ENCODE measurements at regions of chr2 and their contacts with region 1.

Region 1: DNA sequence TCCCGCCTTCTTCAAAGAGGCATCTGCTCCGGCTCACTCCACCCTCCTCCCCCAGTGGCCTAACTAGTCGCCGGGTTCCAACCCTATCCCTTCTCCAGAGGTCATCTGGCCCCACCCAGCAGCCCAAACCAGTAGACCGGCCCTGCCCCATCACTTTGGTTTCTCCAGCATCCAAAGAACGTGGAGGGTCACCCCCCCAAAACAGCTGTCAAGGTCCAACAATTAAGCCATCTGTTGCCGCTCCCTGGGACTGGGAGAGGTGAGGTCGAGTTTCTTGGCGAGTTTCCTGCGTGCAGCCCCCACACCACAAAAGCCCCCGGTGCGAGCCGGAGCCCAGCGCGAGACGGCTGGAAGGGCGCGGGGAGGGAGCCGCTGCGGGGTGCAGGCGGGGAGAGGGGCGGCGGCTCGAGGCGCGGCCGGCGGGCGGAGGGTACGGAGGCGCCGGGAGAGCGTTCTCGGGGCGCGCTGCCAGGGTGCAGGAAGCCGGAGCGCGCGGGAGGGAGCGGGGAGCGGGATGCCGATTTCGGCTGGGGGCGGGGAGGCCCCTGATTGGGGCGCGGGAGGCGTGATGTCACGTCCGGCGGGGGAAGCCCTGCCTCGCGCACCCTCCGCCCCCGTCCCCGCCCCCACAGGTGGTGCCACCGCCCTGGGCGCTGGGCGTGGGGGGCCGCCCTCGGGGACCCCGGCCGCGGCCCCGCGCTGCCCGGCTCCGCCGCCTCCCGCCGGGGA is 571 bp upstream of the GPC1 start:
- DNase-seq: peak; percentile 92
- H3K4me3 Mint-ChIP-seq: peak overlapping the region; percentile 85
- H3K27ac Mint-ChIP-seq: peak overlapping the region; percentile 86
- H3K4me1 Mint-ChIP-seq: peaks cover 23% of the 10 kb centered on the region
- H3K27me3 Mint-ChIP-seq: no peaks in the 10 kb centered on the region
- CTCF ChIP-seq: no peak

Region 2: GRCh38 chr2:240060977-240061591 is 373.8 kb before region 1 on chr2:
- CTCF ChIA-PET with region 1: interaction called, 3 read pairs
- POLR2A ChIA-PET with region 1: no interaction called
- intact Hi-C with region 1: loop called (anchors 10 kb)
- DNase-seq: peak; percentile 68
- H3K4me3 Mint-ChIP-seq: no peak overlapping the region
- H3K27ac Mint-ChIP-seq: no peak overlapping the region
- H3K4me1 Mint-ChIP-seq: no peaks in the 10 kb centered on the region
- H3K27me3 Mint-ChIP-seq: peaks cover 100% of the 10 kb centered on the region
- CTCF ChIP-seq: peak; percentile 66

Region 3: DNA sequence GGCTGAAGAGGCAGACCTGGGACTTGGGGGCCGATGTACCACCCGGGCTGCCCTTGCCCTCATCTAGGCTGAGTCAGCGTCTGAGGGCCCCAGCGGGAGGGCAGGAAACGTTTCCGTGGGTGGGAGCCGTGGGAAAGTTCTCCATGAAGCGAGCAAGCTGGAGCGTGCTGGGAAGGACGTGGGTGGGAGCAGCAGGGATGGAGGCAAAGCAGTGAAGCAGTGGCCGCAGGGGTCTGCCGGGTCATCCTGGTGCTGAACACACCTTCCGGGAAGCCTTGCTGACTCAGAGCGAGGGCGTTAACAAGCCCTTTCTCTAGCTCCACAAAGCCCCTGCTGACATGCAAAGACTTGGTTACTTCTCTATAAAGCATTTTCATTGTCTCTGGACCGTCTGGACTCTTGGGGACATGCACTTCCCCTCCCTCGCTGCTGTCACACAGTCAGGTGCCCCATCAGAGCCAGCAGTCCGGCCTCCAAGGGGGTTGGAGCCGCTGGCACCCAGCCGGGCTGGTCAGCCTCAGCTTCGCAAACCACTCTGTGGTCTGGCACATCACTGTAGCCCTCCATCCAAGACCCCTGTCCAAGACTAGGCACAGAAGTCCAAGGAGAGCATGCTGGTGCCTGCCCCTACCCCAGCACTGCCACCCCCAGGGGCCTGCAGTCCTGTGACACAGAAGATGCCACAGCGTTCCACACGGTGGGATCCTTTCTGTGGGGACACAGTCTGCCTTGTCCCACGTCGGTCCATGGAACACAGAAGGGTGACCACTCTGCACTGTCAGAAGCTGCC is 114.5 kb before region 1 on chr2:
- CTCF ChIA-PET with region 1: no interaction called
- POLR2A ChIA-PET with region 1: interaction called, 3 read pairs
- intact Hi-C with region 1: loop called (anchors 10 kb)
- DNase-seq: peak; percentile 83
- H3K4me3 Mint-ChIP-seq: no peak overlapping the region
- H3K27ac Mint-ChIP-seq: no peak overlapping the region
- H3K4me1 Mint-ChIP-seq: peaks cover 7% of the 10 kb centered on the region
- H3K27me3 Mint-ChIP-seq: peaks cover 21% of the 10 kb centered on the region
- CTCF ChIP-seq: no peak

Region 4: GRCh38 chr2:240369801-240370585 is 64.9 kb before region 1 on chr2:
- CTCF ChIA-PET with region 1: interaction called, 9 read pairs
- POLR2A ChIA-PET with region 1: interaction called, 65 read pairs
- intact Hi-C with region 1: loop called (anchors 1 kb)
- DNase-seq: peak; percentile 84
- H3K4me3 Mint-ChIP-seq: no peak overlapping the region
- H3K27ac Mint-ChIP-seq: peak overlapping the region; percentile 35
- H3K4me1 Mint-ChIP-seq: peaks cover 17% of the 10 kb centered on the region
- H3K27me3 Mint-ChIP-seq: no peaks in the 10 kb centered on the region
- CTCF ChIP-seq: no peak

Region 5: DNA sequence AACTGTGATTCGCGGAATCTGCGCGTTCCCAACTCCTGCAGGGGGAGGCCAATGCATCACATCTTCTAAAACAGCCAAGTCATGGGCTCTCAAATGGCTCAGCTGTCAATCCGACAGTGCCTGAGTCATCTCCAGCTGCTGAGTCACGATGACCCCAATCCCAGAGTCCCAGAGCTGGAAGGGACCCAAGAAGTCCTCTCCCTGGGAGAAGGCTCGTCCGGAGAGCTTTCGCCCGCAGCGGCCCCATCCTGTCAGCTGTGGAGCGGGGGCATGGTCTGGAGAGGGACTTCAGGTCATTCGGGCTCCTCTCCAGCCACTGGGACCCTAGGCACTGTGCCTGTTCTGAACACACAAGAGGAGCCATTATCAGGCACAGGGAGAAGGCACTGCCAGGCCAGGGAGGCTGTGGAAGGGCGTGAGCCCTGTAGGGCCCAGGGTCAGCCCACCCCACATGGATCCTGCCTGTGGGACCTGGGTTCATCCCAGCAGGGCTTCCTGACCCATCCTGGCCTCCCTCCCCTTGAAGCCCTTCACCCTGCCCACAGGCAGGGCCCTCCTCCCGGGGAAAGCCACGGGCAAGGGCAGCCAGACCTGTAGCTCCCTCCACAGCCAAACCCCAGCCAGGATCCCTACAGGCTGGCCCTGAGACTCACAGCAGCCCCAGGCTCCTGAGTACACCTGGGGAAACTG is 47.1 kb before region 1 on chr2:
- CTCF ChIA-PET with region 1: no interaction called
- POLR2A ChIA-PET with region 1: interaction called, 3 read pairs
- intact Hi-C with region 1: loop called (anchors 5 kb)
- DNase-seq: peak; percentile 95
- H3K4me3 Mint-ChIP-seq: no peak overlapping the region
- H3K27ac Mint-ChIP-seq: no peak overlapping the region
- H3K4me1 Mint-ChIP-seq: peaks cover 6% of the 10 kb centered on the region
- H3K27me3 Mint-ChIP-seq: no peaks in the 10 kb centered on the region
- CTCF ChIP-seq: no peak

Region 6: DNA sequence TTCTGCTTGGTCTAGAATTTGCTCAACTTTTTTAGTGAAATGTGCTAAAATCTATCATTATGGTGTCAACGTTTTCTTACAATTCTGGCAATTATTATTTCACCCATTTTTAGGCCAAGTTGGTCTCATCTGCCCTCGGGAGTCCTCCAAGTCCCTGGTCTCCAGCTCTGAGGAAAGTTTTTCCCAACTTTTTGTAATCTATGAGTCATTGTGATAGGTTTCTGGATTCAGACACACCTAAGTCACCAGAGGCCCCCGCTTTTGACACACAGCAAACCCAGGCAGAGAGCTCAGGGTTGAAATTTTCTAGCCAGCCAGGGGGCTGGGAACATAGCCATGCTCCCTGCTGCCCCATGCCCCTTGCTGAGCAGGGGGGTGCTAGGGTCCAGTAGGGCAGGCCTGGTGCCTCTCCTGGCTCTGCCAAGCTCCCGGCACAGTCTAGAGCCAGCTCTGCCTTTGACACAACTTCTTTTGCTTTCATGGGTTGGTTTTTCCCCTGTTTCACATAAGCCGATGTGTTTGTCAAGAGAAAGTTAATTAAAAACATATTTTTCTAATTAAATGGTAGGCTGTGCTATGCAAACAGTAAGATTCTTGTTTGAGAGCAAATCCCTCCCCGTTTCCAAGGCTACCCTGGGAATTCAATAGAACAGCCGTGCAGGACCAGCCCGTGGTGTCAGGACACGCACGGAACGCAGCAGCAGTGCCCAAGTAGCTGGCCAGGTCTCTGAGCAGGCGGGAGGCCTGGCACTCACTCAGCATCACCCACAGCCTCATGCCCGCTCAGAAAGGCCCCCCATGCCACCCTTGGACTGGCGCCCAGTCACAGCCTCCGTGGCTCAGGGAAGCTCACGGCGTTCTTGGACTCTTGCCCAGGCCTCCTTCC is 538.0 kb after region 1 on chr2:
- CTCF ChIA-PET with region 1: no interaction called
- POLR2A ChIA-PET with region 1: no interaction called
- intact Hi-C with region 1: no loop called
- DNase-seq: peak; percentile 65
- H3K4me3 Mint-ChIP-seq: no peak overlapping the region
- H3K27ac Mint-ChIP-seq: peak overlapping the region; percentile 27
- H3K4me1 Mint-ChIP-seq: peaks cover 21% of the 10 kb centered on the region
- H3K27me3 Mint-ChIP-seq: peaks cover 11% of the 10 kb centered on the region
- CTCF ChIP-seq: no peak